ENCODE measurements at regions of chr9 and their contacts with region 1.

Region 1: DNA sequence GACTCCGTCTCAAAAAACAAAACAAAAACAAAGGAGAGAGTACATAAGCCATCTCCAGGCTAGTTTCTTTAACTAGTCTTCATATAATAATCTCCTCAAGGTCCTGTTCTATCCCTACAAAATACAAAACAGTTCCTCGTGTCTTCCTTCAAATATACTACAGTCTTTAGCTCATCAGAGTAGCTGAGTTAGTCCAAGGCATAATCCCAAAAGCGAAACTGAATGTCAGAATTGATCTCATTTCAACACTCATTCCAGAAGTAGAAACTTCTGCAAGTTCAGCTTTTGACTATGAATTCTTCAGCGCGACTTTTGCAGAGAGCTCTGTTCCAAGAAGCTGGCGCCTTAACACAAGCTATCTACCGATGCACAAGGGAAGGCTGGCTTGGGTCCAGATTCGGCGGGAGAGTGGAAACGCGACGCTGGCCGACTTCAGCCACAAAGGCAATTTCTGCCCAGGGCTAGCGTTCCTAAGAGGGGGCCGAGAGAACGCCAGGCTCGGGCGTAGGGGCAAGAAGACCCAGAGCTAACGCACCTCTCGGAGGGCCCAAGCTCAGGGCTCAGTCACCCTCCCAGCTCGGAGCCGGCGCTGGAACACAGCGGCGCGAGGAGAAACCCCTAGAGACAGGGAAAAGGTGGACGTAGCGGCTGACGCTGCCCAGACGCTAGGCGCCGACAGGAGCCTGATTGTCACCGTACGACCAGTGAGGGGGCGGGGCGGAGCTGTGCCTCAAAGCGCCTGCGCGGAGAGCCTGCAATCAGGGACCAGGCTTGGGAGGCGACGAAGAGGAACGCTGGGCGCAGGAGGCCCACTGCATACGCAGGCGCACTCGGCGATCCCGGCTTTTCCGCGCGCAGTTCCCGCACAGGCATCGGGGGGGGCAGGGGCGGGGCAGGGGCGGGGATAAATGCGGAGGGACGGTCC is 469 bp upstream of the HSDL2 start:
- DNase-seq: peak; percentile 99
- H3K4me3 Mint-ChIP-seq: peak overlapping the region; percentile 93
- H3K27ac Mint-ChIP-seq: peak overlapping the region; percentile 95
- H3K4me1 Mint-ChIP-seq: peaks cover 45% of the 10 kb centered on the region
- H3K27me3 Mint-ChIP-seq: no peaks in the 10 kb centered on the region

Region 2: GRCh38 chr9:111896353-111896958 is 483.0 kb before region 1 on chr9 and contains the start of gene UGCG:
- CTCF ChIA-PET with region 1: no interaction called
- POLR2A ChIA-PET with region 1: interaction called, 19 read pairs
- DNase-seq: peak; percentile 89
- H3K4me3 Mint-ChIP-seq: peak within 1 kb of the TSS; percentile 80
- H3K27ac Mint-ChIP-seq: peak within 1 kb of the TSS; percentile 80
- H3K4me1 Mint-ChIP-seq: peaks cover 22% of the 10 kb centered on the region
- H3K27me3 Mint-ChIP-seq: no peaks in the 10 kb centered on the region
- total RNA-seq, gene UGCG: 20.9 to 21.4 TPM

Region 3: DNA sequence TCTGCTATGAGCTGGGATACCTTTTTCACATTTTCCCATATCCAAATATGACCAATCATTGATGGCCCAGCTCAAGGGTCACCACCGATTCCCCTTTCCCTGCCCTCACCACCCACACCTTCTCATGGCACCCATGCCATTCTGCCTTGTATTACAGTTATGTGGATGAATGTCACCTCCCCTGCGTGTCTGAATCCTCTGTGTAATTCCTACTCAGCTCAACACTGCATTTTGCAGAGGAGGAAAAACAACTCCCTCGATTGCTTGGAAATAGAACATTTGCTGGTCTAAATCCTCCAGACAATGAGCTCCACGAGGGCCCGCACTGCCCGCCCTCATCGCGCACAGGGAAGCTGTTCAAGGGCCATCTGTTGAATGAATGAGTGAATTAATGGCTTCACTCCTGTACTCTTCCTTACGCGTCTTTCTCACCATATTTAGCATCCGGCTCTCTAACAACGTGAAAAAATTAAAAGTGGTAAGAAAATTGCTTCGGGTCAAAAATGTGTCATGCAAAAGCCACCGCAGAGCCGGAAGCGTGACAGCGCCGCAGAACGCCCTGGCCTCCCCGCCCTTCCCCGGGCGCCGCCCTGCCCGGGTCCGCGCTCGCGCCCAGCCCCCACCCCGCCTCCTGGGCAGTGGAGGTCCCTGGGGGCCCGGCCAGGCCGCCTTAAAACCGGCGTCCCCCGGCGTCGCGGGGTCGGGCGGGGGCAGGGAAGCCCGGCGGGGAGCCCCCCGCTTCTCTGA is 205.0 kb before region 1 on chr9:
- CTCF ChIA-PET with region 1: no interaction called
- POLR2A ChIA-PET with region 1: interaction called, 40 read pairs
- DNase-seq: peak; percentile 89
- H3K4me3 Mint-ChIP-seq: peak overlapping the region; percentile 86
- H3K27ac Mint-ChIP-seq: peak overlapping the region; percentile 98
- H3K4me1 Mint-ChIP-seq: peaks cover 82% of the 10 kb centered on the region
- H3K27me3 Mint-ChIP-seq: peaks cover 7% of the 10 kb centered on the region

Region 4: GRCh38 chr9:112186695-112187094 is 192.7 kb before region 1 on chr9:
- CTCF ChIA-PET with region 1: no interaction called
- POLR2A ChIA-PET with region 1: no interaction called
- DNase-seq: no peak
- H3K4me3 Mint-ChIP-seq: no peak overlapping the region
- H3K27ac Mint-ChIP-seq: no peak overlapping the region
- H3K4me1 Mint-ChIP-seq: peaks cover 12% of the 10 kb centered on the region
- H3K27me3 Mint-ChIP-seq: peaks cover 5% of the 10 kb centered on the region

Region 5: GRCh38 chr9:112333639-112334431 is 45.6 kb before region 1 on chr9:
- CTCF ChIA-PET with region 1: interaction called, 4 read pairs
- POLR2A ChIA-PET with region 1: interaction called, 63 read pairs
- DNase-seq: peak; percentile 95
- H3K4me3 Mint-ChIP-seq: peak overlapping the region; percentile 88
- H3K27ac Mint-ChIP-seq: peak overlapping the region; percentile 87
- H3K4me1 Mint-ChIP-seq: peaks cover 34% of the 10 kb centered on the region
- H3K27me3 Mint-ChIP-seq: no peaks in the 10 kb centered on the region

Region 6: GRCh38 chr9:112486221-112487007 is 107.0 kb after region 1 on chr9 and contains the start of gene KIAA1958:
- CTCF ChIA-PET with region 1: interaction called, 6 read pairs
- POLR2A ChIA-PET with region 1: interaction called, 24 read pairs
- DNase-seq: peak; percentile 90
- H3K4me3 Mint-ChIP-seq: peak within 1 kb of the TSS; percentile 92
- H3K27ac Mint-ChIP-seq: peak within 1 kb of the TSS; percentile 86
- H3K4me1 Mint-ChIP-seq: peaks cover 31% of the 10 kb centered on the region
- H3K27me3 Mint-ChIP-seq: peaks cover 3% of the 10 kb centered on the region
- total RNA-seq, gene KIAA1958: 6.9 to 7.4 TPM

Region 7: GRCh38 chr9:112750111-112750767 is 370.8 kb after region 1 on chr9 and contains the start of gene SNX30:
- CTCF ChIA-PET with region 1: no interaction called
- POLR2A ChIA-PET with region 1: interaction called, 11 read pairs
- DNase-seq: peak; percentile 83
- H3K4me3 Mint-ChIP-seq: peak within 1 kb of the TSS; percentile 78
- H3K27ac Mint-ChIP-seq: peak within 1 kb of the TSS; percentile 72
- H3K4me1 Mint-ChIP-seq: peaks cover 56% of the 10 kb centered on the region
- H3K27me3 Mint-ChIP-seq: peaks cover 7% of the 10 kb centered on the region
- total RNA-seq, gene SNX30: 8.2 to 8.4 TPM

Measured in activated CD4-positive, alpha-beta memory T cell treated with anti-CD3 and anti-CD28 coated beads, Interleukin-2, amount 10 ng/mL, durations not matched to agents 7 days and 5 days (primary cell).